ENCODE measurements at regions of chr9 and their contacts with region 1.

Region 1: GRCh38 chr9:94166237-94166963 is 82.1 kb downstream of the PTPDC1 start:
- DNase-seq: peak; percentile 98
- H3K4me3 ChIP-seq: peak overlapping the region; percentile 87
- H3K27ac ChIP-seq: peak overlapping the region; percentile 94
- H3K27me3 ChIP-seq: no peaks in the 10 kb centered on the region
- CTCF ChIP-seq: no peak

Region 2: GRCh38 chr9:94110821-94111252 is 55.6 kb before region 1 on chr9:
- CTCF ChIA-PET with region 1: no interaction called
- POLR2A ChIA-PET with region 1: interaction called, 12 read pairs
- DNase-seq: peak; percentile 39
- H3K4me3 ChIP-seq: no peak overlapping the region
- H3K27ac ChIP-seq: no peak overlapping the region
- H3K27me3 ChIP-seq: no peaks in the 10 kb centered on the region
- CTCF ChIP-seq: no peak

Region 3: GRCh38 chr9:95055851-95056551 is 889.6 kb after region 1 on chr9:
- CTCF ChIA-PET with region 1: no interaction called
- POLR2A ChIA-PET with region 1: no interaction called
- DNase-seq: peak; percentile 60
- H3K4me3 ChIP-seq: peak overlapping the region; percentile 52
- H3K27ac ChIP-seq: peak overlapping the region; percentile 85
- H3K27me3 ChIP-seq: no peaks in the 10 kb centered on the region
- CTCF ChIP-seq: no peak

Measured in AG04450 (cell line).